PC-9 (cell line): ENCODE measurements at regions of chr11 and their contacts with region 1.

Region 1: DNA sequence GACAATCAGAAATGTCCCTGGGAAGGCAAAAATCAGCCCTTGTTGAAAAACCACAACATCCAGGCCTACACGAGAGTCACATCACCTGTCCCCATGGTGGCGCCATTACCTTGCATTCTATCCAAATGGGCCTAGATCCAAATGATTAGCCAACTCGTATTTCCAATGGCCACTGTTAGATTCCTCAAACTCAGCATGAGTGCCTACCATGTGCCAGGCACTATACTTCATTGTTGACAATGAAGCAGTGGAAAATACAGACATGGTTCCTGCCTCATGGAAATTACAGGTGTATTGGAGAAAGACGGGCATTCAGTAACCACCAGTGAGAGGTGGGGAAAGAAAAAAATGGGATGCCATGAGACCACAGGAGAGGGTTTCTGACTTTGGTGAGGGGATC is 29.8 kb upstream of the CREB3L1 start:
- DNase-seq: peak; percentile 61 to 72
- H3K4me3 ChIP-seq: no peak overlapping the region
- H3K27ac ChIP-seq: peak overlapping the region; percentile 78
- H3K4me1 ChIP-seq: peaks cover 26% of the 10 kb centered on the region
- H3K27me3 ChIP-seq: no peaks in the 10 kb centered on the region
- CTCF ChIP-seq: peak; percentile 75

Region 2: GRCh38 chr11:46295312-46296058 is 47.8 kb after region 1 on chr11:
- CTCF ChIA-PET with region 1: interaction called, 11 read pairs
- POLR2A ChIA-PET with region 1: interaction called, 19 read pairs
- intact Hi-C with region 1: loop called (anchors 2 kb)
- DNase-seq: peak; percentile 68 to 82
- H3K4me3 ChIP-seq: peak overlapping the region; percentile 73
- H3K27ac ChIP-seq: peak overlapping the region; percentile 70
- H3K4me1 ChIP-seq: peaks cover 68% of the 10 kb centered on the region
- H3K27me3 ChIP-seq: no peaks in the 10 kb centered on the region
- CTCF ChIP-seq: no peak

Region 3: DNA sequence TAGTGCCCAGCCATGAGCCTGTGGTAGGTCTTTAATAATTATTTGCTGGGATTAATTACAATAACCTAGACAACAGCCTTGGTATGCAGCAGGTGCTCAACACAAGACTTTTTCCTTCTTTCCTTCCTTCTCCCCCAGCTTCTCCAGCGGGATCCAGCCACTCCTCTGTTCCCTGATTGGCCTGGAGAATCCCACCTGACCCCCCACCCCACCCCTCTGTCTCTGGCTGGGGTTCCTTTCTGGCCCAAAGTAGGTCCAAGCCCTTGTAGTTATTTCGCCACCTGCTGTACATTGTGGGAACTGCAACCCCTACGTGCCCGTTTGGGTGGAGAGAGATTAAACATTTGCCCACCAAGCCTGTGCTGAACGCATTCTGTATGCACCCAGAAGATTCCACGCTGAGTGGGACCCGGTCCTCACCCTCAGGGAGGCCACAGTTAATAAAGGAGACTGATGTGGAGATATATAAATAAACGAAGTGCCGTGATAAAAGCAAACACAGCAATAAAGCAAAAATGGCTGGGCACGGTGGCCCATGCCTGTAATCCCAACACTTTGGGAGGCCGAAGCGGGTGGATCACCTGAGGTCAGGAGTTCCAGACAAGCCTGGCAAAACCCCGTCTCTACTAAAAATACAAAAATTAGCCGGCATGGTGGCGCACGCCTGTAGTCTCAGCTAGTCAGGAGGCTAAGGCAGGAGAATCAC is 67.5 kb after region 1 on chr11:
- CTCF ChIA-PET with region 1: interaction called, 15 read pairs
- POLR2A ChIA-PET with region 1: interaction called, 5 read pairs
- intact Hi-C with region 1: loop called (anchors 1 kb)
- DNase-seq: peak; percentile 74 to 78
- H3K4me3 ChIP-seq: no peak overlapping the region
- H3K27ac ChIP-seq: no peak overlapping the region
- H3K4me1 ChIP-seq: peaks cover 16% of the 10 kb centered on the region
- H3K27me3 ChIP-seq: no peaks in the 10 kb centered on the region
- CTCF ChIP-seq: peak; percentile 100

Region 4: GRCh38 chr11:46461461-46461927 is 213.8 kb after region 1 on chr11:
- CTCF ChIA-PET with region 1: no interaction called
- POLR2A ChIA-PET with region 1: no interaction called
- intact Hi-C with region 1: no loop called
- DNase-seq: no peak
- H3K4me3 ChIP-seq: no peak overlapping the region
- H3K27ac ChIP-seq: no peak overlapping the region
- H3K4me1 ChIP-seq: no peaks in the 10 kb centered on the region
- H3K27me3 ChIP-seq: no peaks in the 10 kb centered on the region
- CTCF ChIP-seq: no peak

Region 5: DNA sequence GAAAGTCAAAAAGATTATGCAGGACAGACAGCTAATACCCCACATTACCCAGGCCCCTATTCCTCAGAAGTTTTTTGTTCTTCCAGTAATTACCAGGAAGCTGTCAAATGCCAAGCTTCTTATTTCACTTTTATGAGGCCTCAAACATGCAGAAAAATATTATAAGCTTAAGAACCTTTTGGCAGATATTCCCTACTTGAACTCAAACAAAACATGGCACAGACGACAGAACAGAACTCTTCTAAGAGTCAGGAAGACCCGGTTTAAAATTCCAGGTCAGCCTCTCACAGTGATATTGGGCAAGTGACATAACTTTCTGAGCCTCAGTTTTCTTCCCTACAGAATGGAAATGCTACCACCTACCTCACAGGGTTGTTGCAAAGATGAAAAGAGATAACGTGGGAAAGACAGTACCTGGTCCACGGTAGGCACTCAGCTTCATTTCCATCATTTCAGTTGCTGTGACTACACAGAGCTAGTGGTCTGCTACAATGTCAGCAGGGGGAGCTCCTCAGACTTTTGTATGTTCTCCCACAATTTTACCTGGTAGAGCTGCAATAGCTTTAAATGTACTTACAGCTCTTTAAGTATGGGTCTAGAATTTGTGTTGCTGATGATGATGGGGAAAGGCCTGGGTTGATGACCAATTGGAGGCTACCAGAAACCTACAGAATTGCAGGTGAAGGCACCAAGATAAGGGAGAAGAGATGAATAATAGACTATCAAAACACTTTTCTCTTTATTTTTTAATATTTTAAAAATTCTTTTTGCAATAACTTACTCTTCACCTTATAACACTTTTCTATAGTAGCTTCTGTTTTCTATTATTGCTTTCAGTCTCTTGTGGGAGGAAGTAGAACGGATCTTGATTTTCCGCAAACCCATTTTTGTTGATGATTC is 242.2 kb after region 1 on chr11:
- CTCF ChIA-PET with region 1: interaction called, 12 read pairs
- POLR2A ChIA-PET with region 1: interaction called, 5 read pairs
- intact Hi-C with region 1: no loop called
- DNase-seq: peak in 1 of 2 experiments; percentile 23
- H3K4me3 ChIP-seq: no peak overlapping the region
- H3K27ac ChIP-seq: no peak overlapping the region
- H3K4me1 ChIP-seq: no peaks in the 10 kb centered on the region
- H3K27me3 ChIP-seq: no peaks in the 10 kb centered on the region
- CTCF ChIP-seq: peak; percentile 71

Region 6: GRCh38 chr11:46547579-46547978 is 299.9 kb after region 1 on chr11:
- CTCF ChIA-PET with region 1: no interaction called
- POLR2A ChIA-PET with region 1: no interaction called
- intact Hi-C with region 1: no loop called
- DNase-seq: no peak
- H3K4me3 ChIP-seq: no peak overlapping the region
- H3K27ac ChIP-seq: no peak overlapping the region
- H3K4me1 ChIP-seq: peaks cover 4% of the 10 kb centered on the region
- H3K27me3 ChIP-seq: no peaks in the 10 kb centered on the region
- CTCF ChIP-seq: no peak